ENCODE measurements at regions of chr2 and their contacts with region 1.

Region 1: DNA sequence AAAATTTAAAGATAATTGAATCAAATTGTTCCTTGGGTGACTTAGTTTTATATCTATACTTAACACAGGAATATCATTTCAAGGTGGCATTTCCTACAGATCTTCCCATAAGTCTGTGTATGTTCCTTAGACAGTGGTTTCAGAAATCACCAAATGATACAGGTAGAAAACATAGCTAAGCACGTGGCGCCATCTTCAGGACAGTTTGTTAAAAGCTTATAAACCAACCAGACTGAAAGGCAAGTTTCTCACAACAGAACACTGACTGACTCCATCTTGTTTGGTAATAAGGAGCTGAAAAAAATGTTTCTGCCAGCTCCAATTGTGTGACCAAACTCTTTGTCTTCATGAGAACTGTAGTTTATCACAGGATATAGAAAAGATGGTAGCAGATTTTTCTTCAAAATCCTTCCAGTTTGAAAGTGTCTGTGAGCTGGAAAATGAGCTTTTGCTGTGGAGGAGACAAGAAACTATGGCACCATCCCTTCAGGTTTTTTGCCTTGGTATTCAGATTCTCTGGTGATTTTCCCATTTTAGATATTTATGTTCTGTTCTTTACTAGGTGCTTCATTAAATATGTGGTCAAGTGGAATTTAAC is 34.8 kb upstream of the NEUROD1 start:
- DNase-seq: peak; percentile 56
- ATAC-seq: peak; percentile 93
- H3K4me3 ChIP-seq: no peak overlapping the region
- H3K27ac ChIP-seq: no peak overlapping the region
- H3K4me1 ChIP-seq: no peaks in the 10 kb centered on the region
- H3K27me3 ChIP-seq: no peaks in the 10 kb centered on the region
- CTCF ChIP-seq: peak; percentile 55 to 85 (median 70)
- EP300 ChIP-seq: no peak
- POLR2A ChIP-seq: no peak
- RAD21 ChIP-seq: peak; percentile 96

Region 2: DNA sequence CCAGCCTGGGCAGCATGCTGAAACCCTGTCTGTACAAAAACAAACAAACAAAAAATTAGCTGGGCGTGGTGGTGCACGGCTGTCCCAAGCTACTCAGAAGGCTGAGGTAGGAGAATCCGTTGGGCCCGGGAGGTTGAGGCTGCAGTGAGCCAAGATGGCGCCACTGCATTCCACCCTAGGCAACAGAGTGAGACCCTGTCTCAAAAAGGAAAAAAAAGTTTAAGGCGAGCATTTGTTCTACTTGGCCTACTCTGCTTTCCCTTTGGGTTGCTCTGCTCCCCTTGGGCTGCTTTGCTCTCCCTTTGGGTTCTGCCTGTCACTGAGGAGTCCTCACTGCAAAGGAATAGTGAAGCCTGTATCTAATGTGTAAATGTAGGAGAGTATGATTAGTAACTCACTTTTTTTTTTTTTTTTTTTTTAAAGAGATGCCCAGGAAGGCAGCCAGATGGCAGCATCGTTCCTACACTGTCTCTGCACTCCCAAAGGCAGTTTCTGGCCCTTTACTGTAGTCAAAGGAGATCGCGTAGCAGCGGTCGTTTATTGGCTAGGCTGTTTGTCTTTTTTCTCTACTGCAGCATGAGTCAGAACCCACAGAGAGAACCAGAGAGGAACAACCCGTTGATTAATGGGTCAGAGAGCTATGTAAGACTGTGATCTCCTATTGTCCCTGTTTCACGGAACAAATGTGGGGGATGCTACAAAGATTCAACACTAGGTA is 1589.7 kb before region 1 on chr2:
- CTCF ChIA-PET with region 1: interaction called, 10 read pairs
- POLR2A ChIA-PET with region 1: no interaction called
- RAD21 ChIA-PET with region 1: interaction called, 4 read pairs
- SMC1A ChIA-PET with region 1: interaction called, 7 read pairs
- in situ Hi-C with region 1: loop called (anchors 25 kb)
- intact Hi-C with region 1: no loop called
- DNase-seq: peak; percentile 12
- ATAC-seq: peak; percentile 90
- H3K4me3 ChIP-seq: no peak overlapping the region
- H3K27ac ChIP-seq: no peak overlapping the region
- H3K4me1 ChIP-seq: no peaks in the 10 kb centered on the region
- H3K27me3 ChIP-seq: no peaks in the 10 kb centered on the region; a peak in 1 of 4 replicates
- CTCF ChIP-seq: peak; percentile 45 to 59 (median 50); a peak in 5 of 6 replicates
- EP300 ChIP-seq: no peak
- POLR2A ChIP-seq: no peak
- RAD21 ChIP-seq: peak; percentile 58

Region 3: GRCh38 chr2:181178823-181179412 is 536.2 kb before region 1 on chr2:
- CTCF ChIA-PET with region 1: interaction called, 15 read pairs
- POLR2A ChIA-PET with region 1: no interaction called
- RAD21 ChIA-PET with region 1: no interaction called
- SMC1A ChIA-PET with region 1: interaction called, 3 read pairs
- in situ Hi-C with region 1: no loop called
- intact Hi-C with region 1: no loop called
- DNase-seq: no peak
- ATAC-seq: peak; percentile 95
- H3K4me3 ChIP-seq: no peak overlapping the region
- H3K27ac ChIP-seq: no peak overlapping the region
- H3K4me1 ChIP-seq: peaks cover 8% of the 10 kb centered on the region; the same call in 1 of the 2 replicates
- H3K27me3 ChIP-seq: no peaks in the 10 kb centered on the region
- CTCF ChIP-seq: peak in 2 of 3 experiments; percentile 57; a peak in 5 of 6 replicates
- EP300 ChIP-seq: no peak
- POLR2A ChIP-seq: no peak
- RAD21 ChIP-seq: peak; percentile 50; the same call in 1 of the 2 replicates

Region 4: DNA sequence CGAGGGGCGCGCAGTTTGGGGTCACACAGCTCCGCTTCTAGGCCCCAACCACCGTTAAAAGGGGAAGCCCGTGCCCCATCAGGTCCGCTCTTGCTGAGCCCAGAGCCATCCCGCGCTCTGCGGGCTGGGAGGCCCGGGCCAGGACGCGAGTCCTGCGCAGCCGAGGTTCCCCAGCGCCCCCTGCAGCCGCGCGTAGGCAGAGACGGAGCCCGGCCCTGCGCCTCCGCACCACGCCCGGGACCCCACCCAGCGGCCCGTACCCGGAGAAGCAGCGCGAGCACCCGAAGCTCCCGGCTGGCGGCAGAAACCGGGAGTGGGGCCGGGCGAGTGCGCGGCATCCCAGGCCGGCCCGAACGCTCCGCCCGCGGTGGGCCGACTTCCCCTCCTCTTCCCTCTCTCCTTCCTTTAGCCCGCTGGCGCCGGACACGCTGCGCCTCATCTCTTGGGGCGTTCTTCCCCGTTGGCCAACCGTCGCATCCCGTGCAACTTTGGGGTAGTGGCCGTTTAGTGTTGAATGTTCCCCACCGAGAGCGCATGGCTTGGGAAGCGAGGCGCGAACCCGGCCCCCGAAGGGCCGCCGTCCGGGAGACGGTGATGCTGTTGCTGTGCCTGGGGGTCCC is 257.9 kb before region 1 on chr2 and contains the start of gene ITGA4:
- CTCF ChIA-PET with region 1: interaction called, 11 read pairs
- POLR2A ChIA-PET with region 1: no interaction called
- RAD21 ChIA-PET with region 1: interaction called, 10 read pairs
- SMC1A ChIA-PET with region 1: interaction called, 22 read pairs
- in situ Hi-C with region 1: no loop called
- intact Hi-C with region 1: loop called (anchors 5 kb)
- DNase-seq: peak; percentile 56
- ATAC-seq: peak; percentile 90
- H3K4me3 ChIP-seq: peak within 1 kb of the TSS; percentile 88
- H3K27ac ChIP-seq: peak within 1 kb of the TSS; percentile 97
- H3K4me1 ChIP-seq: peaks cover 13% of the 10 kb centered on the region
- H3K27me3 ChIP-seq: no peaks in the 10 kb centered on the region
- CTCF ChIP-seq: peak; percentile 81 to 92 (median 81)
- EP300 ChIP-seq: no peak
- POLR2A ChIP-seq: peak; percentile 84
- RAD21 ChIP-seq: peak; percentile 93
- polyA plus RNA-seq, gene ITGA4: 12.4 to 16.2 TPM

Region 5: DNA sequence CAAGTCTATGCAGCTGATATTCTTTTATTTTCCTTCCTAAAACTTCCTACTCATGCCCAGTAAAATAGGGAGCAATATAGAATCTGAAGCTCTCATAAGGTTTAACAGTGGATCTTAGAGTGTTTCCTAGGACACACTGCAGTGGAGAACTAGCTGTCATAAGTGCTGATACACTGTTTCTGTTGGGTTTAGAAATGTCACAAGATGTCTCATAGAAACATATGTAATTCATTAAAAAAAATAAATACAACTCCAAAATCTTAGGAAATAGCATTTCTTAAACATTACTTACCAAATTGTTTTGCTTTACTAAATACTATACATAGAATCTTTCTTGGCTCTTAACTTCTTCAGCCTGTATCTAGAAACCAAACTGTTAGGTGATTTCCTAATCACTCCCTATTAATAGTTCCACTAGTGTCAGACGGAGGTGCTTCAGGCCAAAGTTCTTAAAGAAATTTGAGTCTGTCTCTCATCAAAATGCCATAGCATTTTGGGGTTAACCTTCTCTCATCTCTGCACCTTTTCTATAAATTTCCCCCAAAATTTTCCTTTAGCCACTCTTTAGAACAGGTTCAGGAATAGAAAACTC is 151.9 kb before region 1 on chr2:
- CTCF ChIA-PET with region 1: interaction called, 45 read pairs
- POLR2A ChIA-PET with region 1: no interaction called
- RAD21 ChIA-PET with region 1: interaction called, 16 read pairs
- SMC1A ChIA-PET with region 1: interaction called, 337 read pairs
- in situ Hi-C with region 1: no loop called
- intact Hi-C with region 1: no loop called
- DNase-seq: no peak
- ATAC-seq: peak; percentile 52; the same call in 2 of the 3 replicates
- H3K4me3 ChIP-seq: no peak overlapping the region
- H3K27ac ChIP-seq: no peak overlapping the region
- H3K4me1 ChIP-seq: no peaks in the 10 kb centered on the region
- H3K27me3 ChIP-seq: no peaks in the 10 kb centered on the region
- CTCF ChIP-seq: no peak
- EP300 ChIP-seq: no peak
- POLR2A ChIP-seq: no peak
- RAD21 ChIP-seq: no peak

Region 6: GRCh38 chr2:181594322-181594721 is 120.8 kb before region 1 on chr2:
- CTCF ChIA-PET with region 1: interaction called, 14 read pairs
- POLR2A ChIA-PET with region 1: no interaction called
- RAD21 ChIA-PET with region 1: interaction called, 4 read pairs
- SMC1A ChIA-PET with region 1: interaction called, 20 read pairs
- in situ Hi-C with region 1: no loop called
- intact Hi-C with region 1: no loop called
- DNase-seq: no peak
- ATAC-seq: peak; percentile 81
- H3K4me3 ChIP-seq: no peak overlapping the region
- H3K27ac ChIP-seq: no peak overlapping the region
- H3K4me1 ChIP-seq: no peaks in the 10 kb centered on the region
- H3K27me3 ChIP-seq: no peaks in the 10 kb centered on the region
- CTCF ChIP-seq: no peak
- EP300 ChIP-seq: no peak; a peak in 1 of 4 replicates
- POLR2A ChIP-seq: no peak
- RAD21 ChIP-seq: no peak